Dorsolateral prefrontal cortex (tissue), 120 donors: ENCODE measurements at regions of chr12 and their contacts with region 1.

Region 1: GRCh38 chr12:3299929-3300832 is 190.8 kb upstream of the PRMT8 start:
- DNase-seq: peak; percentile 83 to 93 (median 90)
- H3K4me3 ChIP-seq: peak overlapping the region in 23 of 59 donors; percentile 0 to 44 (median 20)
- H3K27ac ChIP-seq: peak overlapping the region in 5 of 59 donors; percentile 8 to 58 (median 48)
- H3K27me3 ChIP-seq: peaks cover 0 to 19% (median 0%) of the 10 kb centered on the region in 45 donors
- CTCF ChIP-seq: peak; percentile 64 to 98 (median 90)

Region 2: DNA sequence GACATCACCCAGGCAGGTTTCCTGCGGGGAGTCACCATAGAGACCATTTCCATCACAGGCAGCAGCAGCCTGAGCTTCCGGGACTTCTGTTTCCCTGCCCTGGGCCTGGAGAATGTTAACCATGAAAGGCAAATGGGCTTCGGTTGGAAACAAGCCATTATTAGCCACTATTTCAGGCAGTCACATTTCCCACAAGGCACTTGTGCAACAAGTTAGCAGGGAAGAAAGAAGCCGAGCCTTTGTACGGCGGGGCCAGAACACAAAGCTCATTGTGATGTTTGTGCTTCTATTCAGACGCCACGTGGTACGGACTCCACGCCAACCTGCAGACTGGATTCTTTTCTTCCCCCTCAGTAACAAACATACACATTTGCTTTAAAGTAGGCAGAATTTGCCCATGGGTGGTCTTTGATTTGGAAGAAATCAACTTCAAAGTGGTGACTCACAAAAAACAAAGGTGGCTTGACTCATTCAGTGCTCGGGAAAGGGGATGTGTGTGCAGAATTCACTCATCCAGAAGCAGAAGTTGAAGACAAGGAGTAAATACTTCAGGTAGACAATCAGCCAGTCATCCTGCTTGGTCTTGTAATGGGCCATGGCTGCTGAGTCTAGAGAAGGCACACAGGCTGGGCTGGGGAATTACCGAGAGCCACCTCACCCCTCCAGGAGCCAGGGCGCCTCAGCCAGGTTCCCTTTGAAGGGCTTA is 36.6 kb after region 1 on chr12:
- intact Hi-C with region 1: loop called in 1 of 2 experiments (anchors 5 kb)
- DNase-seq: peak in 9 of 10 donors; percentile 68 to 96 (median 85)
- H3K4me3 ChIP-seq: peak overlapping the region in 3 of 59 donors; percentile 3 to 22 (median 4)
- H3K27ac ChIP-seq: peak overlapping the region; percentile 22 to 98 (median 86)
- H3K27me3 ChIP-seq: no peaks in the 10 kb centered on the region
- CTCF ChIP-seq: peak in 17 of 56 donors; percentile 7 to 45 (median 19)

Region 3: GRCh38 chr12:3491938-3492792 is 192.0 kb after region 1 on chr12:
- intact Hi-C with region 1: loop called in 1 of 2 experiments (anchors 10 kb)
- DNase-seq: peak in 7 of 10 donors; percentile 14 to 71 (median 46)
- H3K4me3 ChIP-seq: peak overlapping the region; percentile 27 to 72 (median 57)
- H3K27ac ChIP-seq: peak overlapping the region in 56 of 59 donors; percentile 48 to 94 (median 83)
- H3K27me3 ChIP-seq: peaks cover 0 to 71% (median 26%) of the 10 kb centered on the region in 45 donors
- CTCF ChIP-seq: peak in 1 of 56 donors; percentile 14

Region 4: DNA sequence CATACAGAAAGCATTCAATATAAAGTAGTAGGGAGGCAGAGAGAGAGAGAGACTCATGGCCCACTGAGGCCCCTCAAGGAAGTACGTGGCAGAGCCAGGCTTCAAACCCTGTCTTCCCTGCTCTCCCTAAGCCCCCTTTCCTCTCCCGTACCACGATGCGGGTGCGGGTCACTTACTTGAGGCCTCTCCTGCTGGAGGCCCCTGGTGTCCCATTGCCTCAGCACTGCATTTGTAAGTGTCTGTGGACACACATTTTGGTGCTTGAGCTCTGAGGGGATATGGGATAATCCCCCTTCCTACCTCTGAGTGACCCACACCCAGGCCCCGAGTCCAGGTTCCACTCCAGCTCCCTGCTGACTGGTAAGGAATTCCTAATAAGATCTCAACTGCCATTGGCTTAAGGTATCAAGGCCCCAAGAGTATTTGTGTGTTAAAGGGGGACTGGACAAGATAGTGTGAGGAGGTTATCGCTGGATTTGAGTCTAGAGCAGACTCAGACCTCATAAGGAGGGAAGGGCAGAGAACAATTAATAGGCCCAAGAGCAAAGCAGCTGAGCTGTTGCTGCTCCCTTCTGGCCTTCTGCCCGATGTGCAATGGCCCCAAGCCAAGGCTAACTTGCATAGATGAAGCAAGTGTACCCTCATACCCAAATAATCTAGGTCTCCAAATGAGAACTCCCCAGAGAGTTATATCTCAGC is 380.9 kb after region 1 on chr12:
- intact Hi-C with region 1: loop called in 1 of 2 experiments (anchors 5 kb)
- DNase-seq: peak in 2 of 10 donors; percentile 31 to 56
- H3K4me3 ChIP-seq: no peak overlapping the region
- H3K27ac ChIP-seq: no peak overlapping the region
- H3K27me3 ChIP-seq: no peaks in the 10 kb centered on the region
- CTCF ChIP-seq: peak in 10 of 56 donors; percentile 10 to 28 (median 16)

Region 5: DNA sequence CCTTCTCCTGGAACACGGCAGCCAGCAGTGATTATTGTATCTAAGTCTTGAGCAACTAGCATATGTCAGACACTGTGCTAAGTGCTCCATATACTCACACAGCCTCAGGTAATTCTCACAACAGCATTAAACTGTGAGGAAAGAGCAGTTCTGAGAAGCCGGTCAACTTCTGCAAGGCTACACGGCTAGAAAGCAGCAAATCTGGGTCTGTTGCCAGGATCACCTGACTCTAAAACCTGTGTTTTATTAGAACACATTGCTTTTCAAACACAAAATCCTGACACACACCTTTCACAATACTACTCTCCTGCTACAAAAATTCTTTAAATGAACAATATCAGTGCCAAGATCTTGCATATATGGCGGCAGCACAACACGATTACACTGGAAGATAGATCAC is 502.5 kb after region 1 on chr12:
- intact Hi-C with region 1: loop called in 1 of 2 experiments (anchors 1 kb)
- DNase-seq: no peak
- H3K4me3 ChIP-seq: no peak overlapping the region
- H3K27ac ChIP-seq: no peak overlapping the region
- H3K27me3 ChIP-seq: no peaks in the 10 kb centered on the region
- CTCF ChIP-seq: no peak